ENCODE measurements at regions of chr5 and their contacts with region 1.

Region 1: DNA sequence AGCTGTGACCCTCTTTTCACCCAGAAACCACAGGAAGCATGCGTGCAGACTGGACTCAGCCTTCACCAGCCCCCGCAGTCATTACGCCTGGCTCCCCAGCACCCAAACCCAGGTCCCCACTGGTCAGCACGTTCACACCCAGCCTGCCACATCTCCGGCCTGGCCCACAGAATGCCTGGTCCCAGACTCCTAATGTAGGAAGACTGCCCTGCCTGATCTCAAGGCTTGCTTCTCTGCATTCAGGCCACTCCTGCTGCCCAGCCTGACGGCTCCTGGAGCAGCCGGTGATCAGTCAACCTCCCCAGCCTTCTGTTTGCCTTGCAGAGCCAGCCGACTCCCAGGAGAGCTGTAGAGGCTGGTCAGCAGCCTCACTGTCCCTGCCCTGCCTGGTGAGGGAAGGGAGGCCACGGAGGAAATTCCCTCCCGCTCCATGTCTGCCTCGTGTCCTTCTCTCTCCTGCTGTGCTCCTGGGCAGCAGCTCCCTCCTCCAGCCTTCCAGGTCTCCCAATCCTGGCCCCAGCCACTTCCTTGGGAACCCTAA is 25.4 kb downstream of the ADAMTS2 start:
- DNase-seq: peak in 1 of 2 donors; percentile 20
- ATAC-seq: no peak
- H3K4me3 ChIP-seq: no peak overlapping the region
- H3K27ac ChIP-seq: no peak overlapping the region
- H3K4me1 ChIP-seq: peaks cover under 1 to 8% of the 10 kb centered on the region in 2 donors
- H3K27me3 ChIP-seq: no peaks in the 10 kb centered on the region
- CTCF ChIP-seq: no peak
- POLR2A ChIP-seq: no peak

Region 2: GRCh38 chr5:178859625-178860531 is 459.9 kb before region 1 on chr5 and contains the start of gene ZNF354B:
- in situ Hi-C with region 1: no loop called
- intact Hi-C with region 1: no loop called
- DNase-seq: peak; percentile 86
- ATAC-seq: peak; percentile 99
- H3K4me3 ChIP-seq: peak within 1 kb of the TSS; percentile 61 to 78 (median 66)
- H3K27ac ChIP-seq: peak within 1 kb of the TSS; percentile 70 to 85 (median 81)
- H3K4me1 ChIP-seq: peaks cover 2 to 6% of the 10 kb centered on the region in 2 donors
- H3K27me3 ChIP-seq: no peaks in the 10 kb centered on the region
- CTCF ChIP-seq: peak in 1 of 5 experiments; percentile 29
- POLR2A ChIP-seq: peak; percentile 61 to 73
- total RNA-seq, gene ZNF354B: 4.4 to 11.3 (median 5.0) TPM

Region 3: DNA sequence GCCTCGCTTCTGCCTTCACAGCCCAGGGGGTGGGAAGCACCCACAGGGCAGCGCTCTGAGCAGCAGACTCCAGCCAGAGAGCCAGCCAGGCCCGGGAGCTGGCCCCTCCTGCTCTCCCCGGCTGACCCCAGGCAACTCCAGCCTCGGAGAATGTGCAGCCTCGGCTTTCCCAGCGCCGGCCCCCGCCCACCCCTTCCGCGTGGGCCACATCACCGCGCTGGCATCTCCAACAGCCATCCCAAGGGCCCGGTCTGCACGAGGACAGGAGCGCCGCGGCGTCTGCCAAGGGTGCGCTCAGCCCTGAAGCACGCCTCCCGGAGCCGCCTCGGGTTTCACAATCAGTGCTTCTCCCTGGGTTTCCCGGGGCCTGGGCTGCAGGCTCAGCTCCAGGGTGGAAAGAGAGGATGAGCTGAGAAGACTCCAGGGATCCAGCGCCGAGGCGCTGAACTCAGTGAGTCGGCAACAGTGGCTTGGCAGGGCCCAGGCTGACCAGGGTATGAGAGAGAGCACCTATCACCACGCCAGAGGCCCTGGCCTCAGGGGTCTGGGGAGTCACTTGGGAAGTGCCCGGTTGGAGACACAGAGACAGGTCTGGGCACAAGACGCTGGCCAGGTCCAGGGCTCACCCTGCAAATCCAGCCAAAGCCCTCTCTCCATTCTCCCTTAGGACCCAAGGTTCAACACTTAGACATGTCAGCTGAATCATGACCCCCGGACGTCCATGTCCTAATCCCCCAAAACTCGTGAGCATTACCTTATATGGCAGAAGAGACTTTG is 54.1 kb before region 1 on chr5:
- in situ Hi-C with region 1: no loop called
- intact Hi-C with region 1: loop called (anchors 5 kb)
- DNase-seq: peak; percentile 92 to 95
- ATAC-seq: peak; percentile 86 to 93
- H3K4me3 ChIP-seq: peak overlapping the region in 2 of 4 donors; percentile 21 to 37
- H3K27ac ChIP-seq: peak overlapping the region; percentile 58 to 74 (median 70)
- H3K4me1 ChIP-seq: peaks cover 12 to 30% of the 10 kb centered on the region in 2 donors
- H3K27me3 ChIP-seq: no peaks in the 10 kb centered on the region
- CTCF ChIP-seq: no peak
- POLR2A ChIP-seq: no peak